ENCODE measurements at regions of chr9 and their contacts with region 1.

Region 1: DNA sequence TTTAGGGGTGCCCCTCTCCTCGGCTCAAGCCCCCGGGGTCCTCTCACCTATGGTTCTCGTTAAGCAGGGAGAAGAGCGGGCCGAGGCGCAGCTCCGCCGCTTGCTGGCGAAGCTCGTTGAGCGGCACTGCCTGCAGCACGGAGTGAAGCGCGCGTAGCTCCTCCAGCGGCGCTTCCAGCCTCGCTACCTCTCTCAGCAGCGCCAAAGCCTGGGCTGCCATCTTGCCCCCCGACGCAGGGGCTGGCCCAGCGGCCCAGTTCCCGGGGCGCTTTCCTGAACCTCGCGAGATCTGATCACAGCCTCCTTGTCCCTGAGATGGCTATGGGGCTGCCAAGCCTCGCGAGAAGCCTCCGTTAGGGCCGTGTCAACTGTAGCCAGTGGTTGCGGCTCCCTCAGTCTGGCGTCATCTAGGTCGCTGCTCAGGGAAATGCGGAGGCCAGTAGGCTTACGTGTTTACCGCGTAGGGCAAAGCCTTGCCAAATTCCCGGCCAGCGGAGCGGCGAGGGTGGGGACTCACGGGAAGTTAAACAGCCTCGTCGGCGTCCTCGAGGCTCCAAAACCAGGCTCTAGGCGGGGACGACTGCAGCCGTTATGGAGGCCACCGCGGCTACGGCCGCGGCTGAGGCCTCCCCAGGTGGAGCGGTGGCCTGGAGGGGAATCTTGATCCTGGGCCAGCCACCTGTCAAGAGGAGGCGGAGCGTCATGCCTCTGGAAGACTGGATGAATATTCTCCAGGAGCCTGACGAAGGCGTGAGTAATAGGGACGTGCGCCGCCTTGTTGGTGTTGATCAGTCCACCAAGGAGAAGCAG is at the start of gene PSMD5:
- DNase-seq: peak; percentile 72 to 99 (median 95)
- H3K4me3 ChIP-seq: peak within 1 kb of the TSS; percentile 59 to 99 (median 82)
- H3K27ac ChIP-seq: peak within 1 kb of the TSS; percentile 55 to 99 (median 93)
- H3K27me3 ChIP-seq: no peaks in the 10 kb centered on the region
- CTCF ChIP-seq: peak in 34 of 56 donors; percentile 4 to 57 (median 29)
- total RNA-seq, gene PSMD5: 18.8 to 51.5 (median 32.6) TPM

Region 2: DNA sequence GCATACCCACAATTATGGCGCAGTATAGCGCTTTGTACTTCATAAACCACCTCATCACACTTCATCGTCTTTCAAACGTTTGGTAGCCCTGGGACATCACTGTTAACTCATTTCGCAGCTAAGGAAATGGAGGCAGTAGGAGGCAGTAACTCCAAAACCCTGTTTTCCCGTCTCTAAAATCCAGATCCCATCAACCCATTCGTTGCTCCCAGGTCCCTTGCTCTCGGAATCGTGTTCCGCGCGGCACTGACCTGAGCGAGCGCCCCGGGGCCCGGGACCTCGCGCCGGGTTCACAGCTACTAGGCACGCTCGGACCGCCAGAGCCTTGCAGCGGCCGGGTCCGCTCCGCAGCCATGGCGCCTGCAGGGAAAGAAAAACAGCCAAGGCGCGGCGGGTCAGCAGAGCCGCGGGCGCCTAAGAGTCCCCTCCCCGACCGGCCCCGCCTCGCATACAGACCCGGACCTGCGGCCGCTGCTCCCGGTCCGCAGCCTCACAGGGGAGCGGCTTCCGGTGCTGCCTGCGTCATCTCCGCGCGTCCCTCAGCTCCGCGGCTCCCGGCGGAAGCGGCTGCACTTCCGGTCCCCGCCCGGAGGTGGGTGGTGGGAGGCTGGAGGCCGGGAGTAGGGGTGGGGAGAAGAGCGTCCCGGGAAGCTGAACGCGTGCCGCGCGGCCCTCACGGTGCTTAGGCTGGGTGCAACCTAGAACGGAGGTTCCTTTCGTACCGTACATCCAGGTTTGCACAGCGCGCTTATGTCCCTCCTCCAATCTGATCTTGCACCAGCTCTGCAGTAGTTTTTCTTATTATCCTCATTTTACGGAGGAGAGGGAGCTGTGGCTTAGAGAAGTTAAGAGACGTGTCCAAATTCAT is 49.8 kb before region 1 on chr9 and contains the start of gene FBXW2:
- intact Hi-C with region 1: loop called (anchors 5 to 10 kb)
- DNase-seq: peak; percentile 82 to 96 (median 90)
- H3K4me3 ChIP-seq: peak within 1 kb of the TSS; percentile 72 to 100 (median 95)
- H3K27ac ChIP-seq: peak within 1 kb of the TSS; percentile 7 to 97 (median 84)
- H3K27me3 ChIP-seq: no peaks in the 10 kb centered on the region
- CTCF ChIP-seq: peak in 43 of 56 donors; percentile 4 to 62 (median 31)
- total RNA-seq, gene FBXW2: 37.6 to 68.5 (median 52.8) TPM

Region 3: DNA sequence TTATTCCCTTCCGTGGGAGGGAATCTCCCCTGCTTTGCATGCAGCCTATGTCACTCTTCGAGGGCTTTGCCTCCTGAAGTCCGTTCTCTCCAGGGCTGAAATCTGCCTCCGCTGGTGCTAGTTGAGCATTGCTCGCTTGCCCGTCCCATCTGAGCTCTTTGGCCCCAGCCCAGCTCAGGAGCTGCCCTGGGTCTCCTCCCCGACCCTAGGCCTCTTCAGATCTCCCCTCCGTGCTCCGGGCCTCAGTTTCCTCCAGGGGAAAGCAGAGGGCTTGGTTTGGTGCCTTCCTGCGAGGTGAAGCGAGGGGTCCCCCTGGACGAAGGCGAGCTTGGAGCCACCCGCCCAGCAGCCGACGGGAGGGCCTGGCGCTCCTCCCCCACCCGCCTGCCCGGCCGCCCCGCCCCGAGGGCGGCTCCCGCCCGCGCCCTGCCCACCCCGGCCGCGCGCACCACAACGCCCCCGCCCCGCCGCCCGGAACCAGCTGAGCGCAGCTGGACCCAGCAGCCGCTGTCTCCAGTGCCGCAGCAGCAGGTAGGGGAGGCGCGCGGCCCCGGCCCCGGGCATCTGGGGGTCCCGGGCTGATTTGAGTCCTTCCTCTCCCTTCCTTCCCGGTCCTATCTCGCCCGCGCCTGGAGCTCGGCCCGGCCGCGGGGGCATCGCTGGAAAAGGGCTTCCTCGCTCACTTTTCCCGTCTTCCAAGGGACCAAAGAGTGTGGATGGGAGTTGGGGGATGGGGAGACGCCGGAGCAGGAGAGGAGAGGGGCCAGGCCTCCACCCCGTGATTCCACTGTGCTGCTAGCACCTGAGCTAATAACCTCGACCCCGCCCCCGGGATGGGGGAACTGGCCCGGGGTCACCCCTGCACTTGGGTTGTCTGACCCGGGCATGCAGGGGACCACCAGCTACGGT is 425.0 kb after region 1 on chr9 and contains the start of gene GSN:
- intact Hi-C with region 1: no loop called
- DNase-seq: peak in 8 of 10 donors; percentile 77 to 90 (median 84)
- H3K4me3 ChIP-seq: peak within 1 kb of the TSS; percentile 59 to 97 (median 88)
- H3K27ac ChIP-seq: peak within 1 kb of the TSS; percentile 79 to 100 (median 97)
- H3K27me3 ChIP-seq: no peaks in the 10 kb centered on the region
- CTCF ChIP-seq: peak in 24 of 56 donors; percentile 7 to 42 (median 24)
- total RNA-seq, gene GSN: 88.2 to 740 (median 233) TPM